ENCODE measurements at regions of chr1 and their contacts with region 1.

Region 1: DNA sequence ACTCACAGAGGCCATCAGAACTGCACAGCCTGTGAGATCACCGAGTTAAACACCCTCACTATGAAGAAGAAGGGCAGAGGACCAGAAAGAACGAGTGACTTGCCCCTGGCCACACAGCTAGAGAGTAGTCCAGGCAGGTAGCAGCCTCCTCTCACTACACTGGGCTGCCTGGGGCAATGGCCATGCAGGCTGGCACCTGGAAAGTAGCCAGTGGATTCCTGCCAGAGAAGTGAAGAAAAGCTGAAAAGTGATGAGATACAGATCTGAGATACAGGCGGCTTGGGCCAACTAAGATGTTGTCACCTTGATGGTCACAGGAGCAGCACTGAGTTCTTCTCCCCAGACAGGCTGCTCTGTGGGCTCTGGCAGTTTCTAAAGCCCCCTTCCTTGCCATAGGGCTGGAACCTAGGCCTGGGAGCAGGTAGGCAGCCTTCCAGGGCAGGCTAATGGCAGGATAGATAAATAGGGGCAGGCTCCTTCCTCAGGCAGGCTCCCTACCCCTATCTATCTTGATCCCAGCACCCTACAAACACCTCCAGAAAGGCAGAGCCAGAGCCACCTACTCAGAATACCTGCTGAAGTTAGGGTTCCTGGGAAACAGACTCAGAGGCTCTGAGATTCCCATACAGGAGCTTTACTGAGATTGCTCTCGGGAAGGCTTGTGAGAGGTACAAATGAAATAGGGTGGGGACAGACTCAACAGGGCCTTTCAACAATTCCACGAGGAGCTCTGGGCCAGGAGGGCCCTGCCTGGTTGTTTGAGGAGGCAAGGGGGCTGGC is 106.3 kb downstream of the BEND5 start:
- DNase-seq: no peak
- ATAC-seq: no peak
- H3K4me3 Mint-ChIP-seq: no peak overlapping the region
- H3K27ac Mint-ChIP-seq: no peak overlapping the region
- H3K4me1 Mint-ChIP-seq: no peaks in the 10 kb centered on the region
- H3K27me3 Mint-ChIP-seq: peaks cover 22% of the 10 kb centered on the region
- CTCF ChIP-seq: no peak

Region 2: DNA sequence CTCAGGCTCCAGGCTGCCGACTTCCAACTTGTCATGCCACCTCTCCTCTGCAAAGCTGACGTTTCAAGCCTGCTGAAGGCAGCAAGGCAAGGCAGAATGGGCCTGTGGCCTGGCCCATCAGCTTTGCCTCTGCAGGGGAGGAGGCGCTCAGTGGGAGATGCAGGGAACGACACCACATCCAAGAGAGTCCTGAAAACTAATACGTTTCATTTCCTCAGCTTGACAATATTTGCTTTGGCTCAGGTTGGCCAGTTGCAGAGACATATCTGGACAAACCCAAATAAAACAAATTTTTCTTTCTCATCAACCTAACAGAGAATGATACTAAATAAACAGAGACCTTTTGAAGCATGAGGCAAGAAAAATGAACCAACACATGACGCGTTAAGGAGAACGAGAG is 71.0 kb after region 1 on chr1:
- CTCF ChIA-PET with region 1: no interaction called
- POLR2A ChIA-PET with region 1: no interaction called
- intact Hi-C with region 1: loop called (anchors 2 kb)
- DNase-seq: no peak
- ATAC-seq: no peak
- H3K4me3 Mint-ChIP-seq: no peak overlapping the region
- H3K27ac Mint-ChIP-seq: no peak overlapping the region
- H3K4me1 Mint-ChIP-seq: no peaks in the 10 kb centered on the region
- H3K27me3 Mint-ChIP-seq: no peaks in the 10 kb centered on the region
- CTCF ChIP-seq: no peak

Measured in activated CD8-positive, alpha-beta T cell treated with anti-CD3 and anti-CD28 coated beads for 36 hours (primary cell).